RWPE1 (cell line): ENCODE measurements at regions of chr9 and their contacts with region 1.

Region 1: DNA sequence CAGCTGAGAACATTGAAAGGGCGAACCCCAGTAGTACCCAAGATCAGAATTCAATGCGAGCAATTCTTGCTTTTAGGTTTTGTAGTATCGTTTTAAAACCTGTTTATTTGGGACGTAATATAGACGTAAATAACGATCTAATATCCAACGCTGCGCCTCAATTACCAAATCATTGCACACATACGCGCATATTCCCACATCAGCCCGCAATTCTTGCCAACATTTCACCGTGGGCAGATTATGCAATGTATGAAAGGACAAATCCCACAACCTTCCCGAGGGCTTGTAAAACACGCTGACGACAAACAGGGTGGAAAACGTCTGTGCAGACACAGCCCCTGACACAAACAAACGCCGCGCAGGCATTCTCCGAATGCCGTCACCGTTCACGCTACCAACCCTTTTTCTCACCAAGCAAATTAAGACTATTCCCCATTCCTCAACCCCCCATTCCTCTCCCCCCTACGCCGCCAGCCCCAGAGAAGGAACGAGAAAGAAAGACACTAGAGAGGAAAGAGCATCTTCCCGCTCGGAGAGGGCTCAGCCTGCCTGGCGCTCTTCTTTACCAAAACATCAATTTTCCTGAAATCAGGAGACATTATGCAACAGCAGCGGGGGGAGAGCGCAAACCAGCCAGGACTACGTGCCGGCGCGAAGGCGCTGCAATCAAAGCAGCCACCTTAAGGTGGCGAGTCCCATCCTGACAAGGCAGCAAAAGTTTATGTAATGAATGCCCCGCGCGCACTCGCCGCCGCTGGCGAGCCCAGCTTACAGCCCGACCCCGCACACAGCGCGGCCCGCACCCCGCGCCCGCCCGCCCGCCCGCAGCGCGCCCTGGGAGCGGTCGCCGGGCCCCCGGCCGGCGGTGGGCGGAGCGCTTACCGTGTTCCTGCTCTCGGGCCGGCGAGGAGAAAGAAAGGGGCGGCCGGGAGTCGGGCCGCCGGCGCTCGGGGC is 597 bp downstream of the NFIL3 start:
- DNase-seq: peak; percentile 84
- H3K27ac ChIP-seq: peak overlapping the region; percentile 93
- CTCF ChIP-seq: peak; percentile 54

Region 2: GRCh38 chr9:91089405-91090129 is 333.5 kb before region 1 on chr9:
- CTCF ChIA-PET with region 1: interaction called, 17 read pairs
- POLR2A ChIA-PET with region 1: no interaction called
- DNase-seq: no peak
- H3K27ac ChIP-seq: no peak overlapping the region
- CTCF ChIP-seq: no peak